Naive thymus-derived CD4-positive, alpha-beta T cell (primary cell): ENCODE measurements at regions of chr5 and their contacts with region 1.

Region 1: GRCh38 chr5:142713121-142713706 is 27.3 kb upstream of the FGF1 start:
- DNase-seq: peak; percentile 72 to 92 (median 86)
- ATAC-seq: peak; percentile 96
- H3K4me3 ChIP-seq: peak overlapping the region; percentile 61
- H3K4me3 Mint-ChIP-seq: peak overlapping the region; percentile 45 to 82 (median 70)
- H3K27ac ChIP-seq: no peak overlapping the region
- H3K27ac Mint-ChIP-seq: peak overlapping the region in 2 of 9 donors; percentile 39 to 73
- H3K4me1 ChIP-seq: peaks cover 0 to 7% of the 10 kb centered on the region in 2 donors
- H3K4me1 Mint-ChIP-seq: peaks cover 0 to 16% (median 10%) of the 10 kb centered on the region in 7 donors
- H3K27me3 ChIP-seq: no peaks in the 10 kb centered on the region
- H3K27me3 Mint-ChIP-seq: peaks cover 0 to 33% (median 4%) of the 10 kb centered on the region in 5 donors

Region 2: GRCh38 chr5:141923448-141924352 is 789.5 kb before region 1 on chr5 and contains the start of gene DELE1:
- CTCF ChIA-PET with region 1: no interaction called
- POLR2A ChIA-PET with region 1: no interaction called
- intact Hi-C with region 1: loop called in 1 of 2 experiments (anchors 1 kb)
- DNase-seq: peak; percentile 79 to 92 (median 90)
- ATAC-seq: peak; percentile 97
- H3K4me3 ChIP-seq: peak within 1 kb of the TSS; percentile 81
- H3K4me3 Mint-ChIP-seq: peak within 1 kb of the TSS; percentile 88 to 98 (median 94)
- H3K27ac ChIP-seq: peak within 1 kb of the TSS; percentile 98
- H3K27ac Mint-ChIP-seq: peak within 1 kb of the TSS; percentile 87 to 99 (median 98)
- H3K4me1 ChIP-seq: peaks cover 10 to 14% of the 10 kb centered on the region in 2 donors
- H3K4me1 Mint-ChIP-seq: peaks cover 23 to 54% (median 36%) of the 10 kb centered on the region in 7 donors
- H3K27me3 ChIP-seq: no peaks in the 10 kb centered on the region
- H3K27me3 Mint-ChIP-seq: no peaks in the 10 kb centered on the region
- total RNA-seq, gene DELE1: 77.3 to 101 (median 88.2) TPM

Region 3: DNA sequence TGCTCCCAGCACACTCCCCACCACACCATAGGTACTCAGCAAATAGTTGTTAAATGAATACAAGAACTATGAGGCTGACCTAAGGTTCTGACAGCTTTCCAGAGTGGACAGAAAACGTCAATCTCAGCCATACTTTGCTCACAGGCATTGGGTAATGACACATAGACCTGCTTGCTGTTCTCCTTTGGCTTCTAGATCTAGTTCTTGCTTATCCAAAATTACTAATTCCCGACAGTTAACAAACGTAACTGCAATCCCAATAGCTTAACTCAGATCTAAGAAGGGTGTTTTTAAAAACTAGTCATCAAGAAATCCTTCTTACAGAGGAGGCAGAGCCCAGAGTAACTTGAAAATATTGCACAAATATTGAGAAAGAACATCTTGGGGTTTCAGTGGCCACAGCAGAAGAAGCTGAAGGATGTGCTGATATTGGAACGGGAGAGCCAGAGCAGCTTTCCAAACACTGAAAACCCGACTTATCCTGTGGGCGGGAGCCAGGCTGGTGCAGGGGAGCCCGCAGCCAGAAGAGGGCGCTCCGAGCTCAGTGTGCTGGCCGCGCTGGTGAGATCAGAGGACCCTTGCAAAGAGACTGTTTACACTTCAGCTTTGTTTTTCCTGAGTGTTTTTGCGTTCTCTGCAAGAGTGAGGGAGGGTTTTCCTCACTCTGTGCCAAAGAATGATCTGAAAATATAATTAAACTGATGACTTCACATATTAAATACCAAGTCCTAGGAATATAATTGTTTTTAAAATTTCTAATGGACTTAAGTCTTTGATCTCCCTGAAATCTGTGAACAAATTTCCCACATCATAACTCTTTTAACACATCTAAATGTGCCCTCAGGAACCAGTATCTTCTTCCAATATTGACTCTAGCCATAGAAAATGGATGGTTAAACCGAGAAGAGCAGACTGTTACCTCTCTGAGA is 57.6 kb before region 1 on chr5:
- CTCF ChIA-PET with region 1: interaction called, 4 read pairs
- POLR2A ChIA-PET with region 1: no interaction called
- intact Hi-C with region 1: loop called in 1 of 2 experiments (anchors 1 kb)
- DNase-seq: peak; percentile 26 to 76 (median 61)
- ATAC-seq: peak; percentile 90
- H3K4me3 ChIP-seq: no peak overlapping the region
- H3K4me3 Mint-ChIP-seq: no peak overlapping the region
- H3K27ac ChIP-seq: no peak overlapping the region
- H3K27ac Mint-ChIP-seq: no peak overlapping the region
- H3K4me1 ChIP-seq: no peaks in the 10 kb centered on the region
- H3K4me1 Mint-ChIP-seq: peaks cover 0 to 9% (median 7%) of the 10 kb centered on the region in 7 donors
- H3K27me3 ChIP-seq: no peaks in the 10 kb centered on the region
- H3K27me3 Mint-ChIP-seq: peaks cover 8 to 29% (median 11%) of the 10 kb centered on the region in 5 donors

Region 4: DNA sequence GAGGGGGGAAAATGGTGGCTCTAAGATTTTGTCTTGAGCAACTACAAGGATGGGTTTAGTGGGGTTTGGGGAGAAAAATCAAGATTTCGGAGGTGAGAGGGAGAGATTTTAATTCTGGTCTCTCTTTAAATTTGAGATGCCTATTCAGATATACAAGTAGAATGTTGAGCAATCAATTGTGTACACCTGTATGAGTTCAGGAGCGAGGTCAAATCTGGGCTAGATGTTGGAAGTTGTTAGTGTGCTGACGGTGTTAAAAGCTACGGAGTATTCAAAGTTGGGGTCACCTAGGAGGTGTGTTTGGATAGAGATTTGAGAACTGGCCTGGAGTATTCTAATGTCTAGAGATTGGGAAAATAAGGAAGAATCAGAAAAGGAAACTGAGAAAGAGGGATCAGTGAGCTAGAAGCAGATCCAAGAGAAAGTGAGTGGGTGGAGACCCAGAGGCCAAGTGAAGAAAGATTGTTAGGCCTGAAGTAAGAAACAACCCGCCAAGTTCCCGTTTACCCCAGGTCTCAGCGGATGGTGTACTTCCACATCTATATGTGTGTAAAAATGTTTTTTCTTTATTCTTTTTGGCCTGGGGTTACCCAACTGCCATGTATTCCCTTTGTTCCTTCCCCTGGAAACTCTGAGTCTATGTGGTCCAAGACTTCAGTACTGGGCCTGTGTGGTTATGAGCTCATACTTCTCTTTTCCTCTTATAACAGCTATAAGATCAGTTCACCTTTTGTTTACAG is 45.0 kb after region 1 on chr5:
- CTCF ChIA-PET with region 1: no interaction called
- POLR2A ChIA-PET with region 1: no interaction called
- intact Hi-C with region 1: no loop called
- DNase-seq: no peak
- ATAC-seq: peak; percentile 77
- H3K4me3 ChIP-seq: no peak overlapping the region
- H3K4me3 Mint-ChIP-seq: no peak overlapping the region
- H3K27ac ChIP-seq: no peak overlapping the region
- H3K27ac Mint-ChIP-seq: no peak overlapping the region
- H3K4me1 ChIP-seq: no peaks in the 10 kb centered on the region
- H3K4me1 Mint-ChIP-seq: peaks cover 0 to 12% (median 0%) of the 10 kb centered on the region in 7 donors
- H3K27me3 ChIP-seq: no peaks in the 10 kb centered on the region
- H3K27me3 Mint-ChIP-seq: peaks cover 0 to 11% (median 0%) of the 10 kb centered on the region in 5 donors

Region 5: GRCh38 chr5:142881076-142881783 is 168.0 kb after region 1 on chr5:
- CTCF ChIA-PET with region 1: interaction called, 17 read pairs
- POLR2A ChIA-PET with region 1: interaction called, 6 read pairs
- intact Hi-C with region 1: loop called (anchors 1 kb)
- DNase-seq: no peak
- ATAC-seq: peak; percentile 84
- H3K4me3 ChIP-seq: no peak overlapping the region
- H3K4me3 Mint-ChIP-seq: no peak overlapping the region
- H3K27ac ChIP-seq: no peak overlapping the region
- H3K27ac Mint-ChIP-seq: no peak overlapping the region
- H3K4me1 ChIP-seq: peaks cover 0 to 3% of the 10 kb centered on the region in 2 donors
- H3K4me1 Mint-ChIP-seq: peaks cover 0 to 11% (median 5%) of the 10 kb centered on the region in 7 donors
- H3K27me3 ChIP-seq: no peaks in the 10 kb centered on the region
- H3K27me3 Mint-ChIP-seq: no peaks in the 10 kb centered on the region

Region 6: DNA sequence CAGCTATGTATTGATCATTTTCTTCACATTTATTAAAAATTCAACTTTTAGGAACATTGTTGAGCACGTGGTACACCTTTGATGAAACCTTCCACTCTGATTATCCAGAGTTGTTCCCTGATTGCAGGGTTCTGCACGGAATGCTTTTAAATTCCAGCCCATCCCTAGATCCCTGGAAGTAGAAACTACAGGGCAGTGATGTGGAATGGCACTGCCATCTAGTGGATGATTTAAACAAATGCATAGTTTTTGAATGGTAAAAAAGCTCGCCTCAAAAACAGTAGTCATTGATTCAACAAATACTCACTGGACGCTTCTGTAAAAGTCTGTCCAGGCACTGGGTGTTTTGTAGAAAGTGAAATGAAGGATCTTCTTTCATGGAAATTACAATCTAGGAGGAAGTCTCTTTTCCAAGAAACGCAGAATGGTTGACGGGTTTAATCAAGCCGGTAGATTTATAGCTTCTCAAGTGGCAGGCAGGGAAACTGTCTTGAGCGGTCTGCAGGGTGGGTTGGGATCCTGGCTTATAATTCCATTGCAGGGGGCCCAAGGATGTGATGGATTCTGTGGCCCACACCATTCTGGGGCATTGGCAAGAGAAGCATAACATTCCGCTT is 175.4 kb after region 1 on chr5:
- CTCF ChIA-PET with region 1: interaction called, 28 read pairs
- POLR2A ChIA-PET with region 1: interaction called, 3 read pairs
- intact Hi-C with region 1: loop called (anchors 1 kb)
- DNase-seq: peak in 4 of 9 donors; percentile 19 to 27 (median 24)
- ATAC-seq: peak; percentile 45
- H3K4me3 ChIP-seq: no peak overlapping the region
- H3K4me3 Mint-ChIP-seq: no peak overlapping the region
- H3K27ac ChIP-seq: no peak overlapping the region
- H3K27ac Mint-ChIP-seq: no peak overlapping the region
- H3K4me1 ChIP-seq: peaks cover 0 to 8% of the 10 kb centered on the region in 2 donors
- H3K4me1 Mint-ChIP-seq: peaks cover 0 to 16% (median 5%) of the 10 kb centered on the region in 7 donors
- H3K27me3 ChIP-seq: no peaks in the 10 kb centered on the region
- H3K27me3 Mint-ChIP-seq: no peaks in the 10 kb centered on the region

Region 7: GRCh38 chr5:143968011-143968878 is 1255.0 kb after region 1 on chr5:
- CTCF ChIA-PET with region 1: no interaction called
- POLR2A ChIA-PET with region 1: no interaction called
- intact Hi-C with region 1: loop called in 1 of 2 experiments (anchors 2 kb)
- DNase-seq: peak in 6 of 9 donors; percentile 13 to 43 (median 27)
- ATAC-seq: no peak
- H3K4me3 ChIP-seq: no peak overlapping the region
- H3K4me3 Mint-ChIP-seq: no peak overlapping the region
- H3K27ac ChIP-seq: no peak overlapping the region
- H3K27ac Mint-ChIP-seq: no peak overlapping the region
- H3K4me1 ChIP-seq: no peaks in the 10 kb centered on the region
- H3K4me1 Mint-ChIP-seq: peaks cover 0 to 6% (median 0%) of the 10 kb centered on the region in 7 donors
- H3K27me3 ChIP-seq: no peaks in the 10 kb centered on the region
- H3K27me3 Mint-ChIP-seq: peaks cover 6 to 27% (median 22%) of the 10 kb centered on the region in 5 donors

Region 8: GRCh38 chr5:144170276-144171024 is 1457.2 kb after region 1 on chr5 and contains the starts of genes KCTD16 and YIPF5:
- CTCF ChIA-PET with region 1: no interaction called
- POLR2A ChIA-PET with region 1: no interaction called
- intact Hi-C with region 1: loop called in 1 of 2 experiments (anchors 2 kb)
- DNase-seq: peak; percentile 90 to 98 (median 98)
- ATAC-seq: peak; percentile 98
- H3K4me3 ChIP-seq: peak within 1 kb of the TSS; percentile 79
- H3K4me3 Mint-ChIP-seq: peak within 1 kb of the TSS; percentile 90 to 99 (median 94)
- H3K27ac ChIP-seq: peak within 1 kb of the TSS; percentile 91
- H3K27ac Mint-ChIP-seq: peak within 1 kb of the TSS; percentile 85 to 96 (median 95)
- H3K4me1 ChIP-seq: peaks cover 15 to 19% of the 10 kb centered on the region in 2 donors
- H3K4me1 Mint-ChIP-seq: peaks cover 19 to 56% (median 52%) of the 10 kb centered on the region in 7 donors
- H3K27me3 ChIP-seq: no peaks in the 10 kb centered on the region
- H3K27me3 Mint-ChIP-seq: peaks cover 0 to 29% (median 0%) of the 10 kb centered on the region in 5 donors
- total RNA-seq, gene KCTD16: 0.07 to 0.22 TPM in 2 of 5 experiments, not detected in the others
- total RNA-seq, gene YIPF5: 27.0 to 49.2 (median 38.6) TPM